ENCODE measurements at regions of chr13 and their contacts with region 1.

Region 1: DNA sequence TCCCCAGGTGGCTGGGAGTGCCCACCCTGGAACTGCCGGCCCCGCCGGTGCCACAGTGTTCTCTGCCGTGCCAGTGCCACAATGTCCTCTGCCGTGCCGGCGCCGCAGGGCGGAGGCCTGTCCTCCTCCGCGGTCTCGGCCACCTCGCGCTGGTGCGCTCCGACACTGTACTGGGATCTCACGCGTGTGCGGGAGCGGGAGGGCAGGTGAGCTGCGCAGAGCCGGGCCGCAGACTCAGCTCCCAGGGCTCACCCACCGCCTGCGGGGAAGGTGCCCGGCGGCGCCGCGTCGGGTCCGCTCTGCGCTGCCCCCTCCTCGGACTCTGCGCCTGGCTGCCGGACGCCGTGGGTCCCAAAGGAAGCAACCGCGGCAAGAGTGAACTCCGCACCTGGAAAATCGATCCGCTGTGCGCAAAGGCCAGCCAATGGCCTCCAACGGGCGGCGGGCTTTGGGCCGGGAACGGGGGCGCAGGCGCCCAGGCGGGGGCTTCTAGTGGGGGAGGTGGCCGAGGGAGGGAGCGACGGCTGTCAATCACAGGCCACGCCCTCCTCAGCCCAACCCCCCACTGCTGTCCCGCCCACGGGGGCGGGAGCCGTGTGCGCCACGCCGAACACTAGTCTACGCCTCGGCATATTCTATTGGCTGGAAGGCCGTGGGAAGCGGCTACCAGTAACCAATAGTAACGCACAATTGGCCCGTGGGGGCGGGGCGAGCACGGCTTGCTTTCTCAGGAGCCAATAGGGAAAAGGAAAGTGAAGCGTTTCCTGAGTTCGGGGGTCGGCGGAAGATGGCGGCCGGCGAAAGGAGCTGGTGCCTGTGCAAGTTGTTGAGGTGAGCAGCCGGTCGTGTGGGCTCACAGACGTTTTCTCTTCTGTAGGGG is at the start of gene ALG11:
- DNase-seq: peak; percentile 99
- H3K4me3 ChIP-seq: peak within 1 kb of the TSS; percentile 71 to 92
- H3K4me3 Mint-ChIP-seq: peak within 1 kb of the TSS; percentile 96 to 100 (median 100)
- H3K27ac ChIP-seq: peak within 1 kb of the TSS; percentile 52
- H3K27ac Mint-ChIP-seq: peak within 1 kb of the TSS; percentile 87 to 98 (median 97)
- H3K4me1 ChIP-seq: peaks cover 22% of the 10 kb centered on the region
- H3K4me1 Mint-ChIP-seq: peaks cover 14 to 44% (median 23%) of the 10 kb centered on the region in 4 donors
- H3K27me3 ChIP-seq: peaks cover 8% of the 10 kb centered on the region
- H3K27me3 Mint-ChIP-seq: peaks cover 4 to 24% of the 10 kb centered on the region in 2 donors
- total RNA-seq, gene ALG11: 37.2 to 42.2 TPM

Region 2: GRCh38 chr13:51803422-51804294 is 208.2 kb before region 1 on chr13 and contains the start of gene DHRS12:
- CTCF ChIA-PET with region 1: no interaction called
- POLR2A ChIA-PET with region 1: no interaction called
- intact Hi-C with region 1: loop called (anchors 1 kb)
- DNase-seq: peak; percentile 92 to 96 (median 95)
- H3K4me3 ChIP-seq: peak within 1 kb of the TSS; percentile 76 to 88
- H3K4me3 Mint-ChIP-seq: peak within 1 kb of the TSS; percentile 91 to 98 (median 96)
- H3K27ac ChIP-seq: peak within 1 kb of the TSS; percentile 96
- H3K27ac Mint-ChIP-seq: peak within 1 kb of the TSS; percentile 98 to 100 (median 100)
- H3K4me1 ChIP-seq: peaks cover 45% of the 10 kb centered on the region
- H3K4me1 Mint-ChIP-seq: peaks cover 34 to 59% (median 47%) of the 10 kb centered on the region in 4 donors
- H3K27me3 ChIP-seq: no peaks in the 10 kb centered on the region
- H3K27me3 Mint-ChIP-seq: no peaks in the 10 kb centered on the region
- total RNA-seq, gene DHRS12: 23.6 to 24.3 TPM

Region 3: DNA sequence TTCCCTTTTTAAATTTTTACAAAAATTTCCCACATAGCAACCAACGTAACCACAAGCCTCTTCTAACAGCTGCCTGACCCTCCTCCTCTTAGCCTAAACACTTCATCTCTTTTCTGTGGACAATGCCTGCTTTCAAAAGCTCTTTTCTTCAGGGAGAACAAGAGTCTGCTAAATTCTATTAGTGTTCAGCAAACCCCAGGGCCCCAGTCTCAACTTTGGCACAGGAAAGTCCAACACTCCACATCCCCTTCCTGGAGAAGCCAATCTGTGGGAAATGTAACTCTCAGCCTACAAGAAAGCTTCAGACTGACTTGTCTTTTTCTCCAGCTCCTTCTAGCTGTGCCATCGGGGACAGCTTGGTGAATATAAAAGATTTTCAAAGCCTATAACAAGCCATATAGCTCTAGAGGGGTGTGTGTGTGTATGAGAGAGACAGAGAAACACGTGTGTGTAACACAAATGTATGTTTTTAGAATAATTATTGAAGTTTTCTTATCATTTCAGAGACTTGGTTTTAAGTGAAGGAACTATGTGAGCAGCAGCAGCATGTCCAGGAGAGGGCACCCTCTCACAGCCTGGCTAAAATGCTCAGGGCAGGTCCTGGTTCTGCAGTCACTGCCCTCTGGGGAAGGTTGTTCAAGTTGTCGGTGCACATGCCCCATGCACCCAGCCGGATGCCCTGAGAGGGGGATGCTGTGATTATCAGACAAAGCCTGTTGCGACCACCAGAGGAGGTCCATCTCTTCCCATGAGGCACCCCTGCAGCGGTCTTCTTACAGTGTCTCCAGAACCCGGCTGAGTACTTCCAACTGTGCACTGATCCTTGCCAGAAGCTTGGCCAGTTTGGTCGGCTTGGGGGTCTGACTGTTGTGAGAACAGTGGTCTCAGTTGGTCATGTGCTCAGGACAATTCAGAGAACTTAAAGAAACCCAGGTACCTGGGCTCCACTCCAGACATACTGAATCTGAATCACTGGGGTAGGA is 115.7 kb before region 1 on chr13:
- CTCF ChIA-PET with region 1: interaction called, 5 read pairs
- POLR2A ChIA-PET with region 1: interaction called, 3 read pairs
- intact Hi-C with region 1: loop called (anchors 5 kb)
- DNase-seq: peak in 4 of 5 donors; percentile 38 to 47 (median 42)
- H3K4me3 ChIP-seq: no peak overlapping the region
- H3K4me3 Mint-ChIP-seq: no peak overlapping the region
- H3K27ac ChIP-seq: no peak overlapping the region
- H3K27ac Mint-ChIP-seq: no peak overlapping the region
- H3K4me1 ChIP-seq: no peaks in the 10 kb centered on the region
- H3K4me1 Mint-ChIP-seq: peaks cover 0 to 4% (median 1%) of the 10 kb centered on the region in 4 donors
- H3K27me3 ChIP-seq: no peaks in the 10 kb centered on the region
- H3K27me3 Mint-ChIP-seq: peaks cover 1 to 17% of the 10 kb centered on the region in 2 donors

Region 4: DNA sequence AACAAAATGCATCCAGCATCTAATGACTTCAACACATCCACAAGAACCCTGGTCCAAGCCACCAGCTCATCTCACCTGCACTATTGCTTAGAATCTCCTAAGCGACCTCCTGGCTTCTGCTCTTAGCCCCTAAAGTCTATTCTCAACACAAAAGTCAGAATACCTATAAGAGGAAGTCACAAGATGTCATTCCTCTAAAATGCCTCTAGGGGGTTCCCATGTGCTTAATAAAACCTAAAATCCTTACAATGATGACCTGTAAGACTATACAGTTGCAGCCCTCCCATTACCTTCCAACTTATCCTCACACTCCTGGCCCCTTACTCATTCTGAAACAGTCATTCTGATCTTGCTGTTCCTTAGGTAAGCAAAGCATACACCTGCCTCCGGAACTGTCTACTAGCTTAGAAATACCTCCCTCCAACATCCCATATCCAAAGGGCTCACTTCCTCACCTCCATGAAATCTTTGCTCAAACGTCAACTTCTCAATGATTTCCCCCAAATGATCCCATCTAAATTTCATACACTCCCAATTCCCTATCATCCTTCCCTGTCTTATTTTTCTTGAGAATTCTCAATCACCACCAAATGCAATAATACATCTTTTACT is 10.6 kb before region 1 on chr13:
- CTCF ChIA-PET with region 1: interaction called, 42 read pairs
- POLR2A ChIA-PET with region 1: interaction called, 5 read pairs
- intact Hi-C with region 1: no loop called
- DNase-seq: peak in 4 of 5 donors; percentile 41 to 48 (median 43)
- H3K4me3 ChIP-seq: no peak overlapping the region
- H3K4me3 Mint-ChIP-seq: no peak overlapping the region
- H3K27ac ChIP-seq: no peak overlapping the region
- H3K27ac Mint-ChIP-seq: peak overlapping the region in 1 of 7 donors; percentile 56
- H3K4me1 ChIP-seq: no peaks in the 10 kb centered on the region
- H3K4me1 Mint-ChIP-seq: peaks cover 0 to 2% (median under 1%) of the 10 kb centered on the region in 4 donors
- H3K27me3 ChIP-seq: peaks cover 5% of the 10 kb centered on the region
- H3K27me3 Mint-ChIP-seq: peaks cover 4 to 7% of the 10 kb centered on the region in 2 donors

Region 5: GRCh38 chr13:52159321-52160086 is 147.6 kb after region 1 on chr13 and contains the start of gene NEK3:
- CTCF ChIA-PET with region 1: no interaction called
- POLR2A ChIA-PET with region 1: interaction called, 3 read pairs
- intact Hi-C with region 1: loop called (anchors 1 kb)
- DNase-seq: peak; percentile 53 to 65 (median 59)
- H3K4me3 ChIP-seq: peak within 1 kb of the TSS; percentile 55 to 70
- H3K4me3 Mint-ChIP-seq: peak within 1 kb of the TSS; percentile 89 to 95 (median 93)
- H3K27ac ChIP-seq: peak within 1 kb of the TSS; percentile 40
- H3K27ac Mint-ChIP-seq: peak within 1 kb of the TSS; percentile 73 to 95 (median 86)
- H3K4me1 ChIP-seq: peaks cover 15% of the 10 kb centered on the region
- H3K4me1 Mint-ChIP-seq: peaks cover 27 to 46% (median 32%) of the 10 kb centered on the region in 4 donors
- H3K27me3 ChIP-seq: no peaks in the 10 kb centered on the region
- H3K27me3 Mint-ChIP-seq: no peaks in the 10 kb centered on the region
- total RNA-seq, gene NEK3: 6.4 to 8.2 TPM

Region 6: GRCh38 chr13:52652196-52652979 is 640.5 kb after region 1 on chr13 and contains the start of gene SUGT1:
- CTCF ChIA-PET with region 1: no interaction called
- POLR2A ChIA-PET with region 1: interaction called, 5 read pairs
- intact Hi-C with region 1: loop called (anchors 1 kb)
- DNase-seq: peak; percentile 96 to 98 (median 97)
- H3K4me3 ChIP-seq: peak within 1 kb of the TSS; percentile 61 to 94
- H3K4me3 Mint-ChIP-seq: no peak within 1 kb of the TSS
- H3K27ac ChIP-seq: peak within 1 kb of the TSS; percentile 96
- H3K27ac Mint-ChIP-seq: no peak within 1 kb of the TSS
- H3K4me1 ChIP-seq: peaks cover 46% of the 10 kb centered on the region
- H3K4me1 Mint-ChIP-seq: peaks cover 8 to 16% (median 13%) of the 10 kb centered on the region in 4 donors
- H3K27me3 ChIP-seq: no peaks in the 10 kb centered on the region
- H3K27me3 Mint-ChIP-seq: no peaks in the 10 kb centered on the region
- total RNA-seq, gene SUGT1: 40.4 to 42.5 TPM

Measured in CD4-positive, alpha-beta memory T cell (primary cell).